ENCODE measurements at regions of chr5 and their contacts with region 1.

Region 1: DNA sequence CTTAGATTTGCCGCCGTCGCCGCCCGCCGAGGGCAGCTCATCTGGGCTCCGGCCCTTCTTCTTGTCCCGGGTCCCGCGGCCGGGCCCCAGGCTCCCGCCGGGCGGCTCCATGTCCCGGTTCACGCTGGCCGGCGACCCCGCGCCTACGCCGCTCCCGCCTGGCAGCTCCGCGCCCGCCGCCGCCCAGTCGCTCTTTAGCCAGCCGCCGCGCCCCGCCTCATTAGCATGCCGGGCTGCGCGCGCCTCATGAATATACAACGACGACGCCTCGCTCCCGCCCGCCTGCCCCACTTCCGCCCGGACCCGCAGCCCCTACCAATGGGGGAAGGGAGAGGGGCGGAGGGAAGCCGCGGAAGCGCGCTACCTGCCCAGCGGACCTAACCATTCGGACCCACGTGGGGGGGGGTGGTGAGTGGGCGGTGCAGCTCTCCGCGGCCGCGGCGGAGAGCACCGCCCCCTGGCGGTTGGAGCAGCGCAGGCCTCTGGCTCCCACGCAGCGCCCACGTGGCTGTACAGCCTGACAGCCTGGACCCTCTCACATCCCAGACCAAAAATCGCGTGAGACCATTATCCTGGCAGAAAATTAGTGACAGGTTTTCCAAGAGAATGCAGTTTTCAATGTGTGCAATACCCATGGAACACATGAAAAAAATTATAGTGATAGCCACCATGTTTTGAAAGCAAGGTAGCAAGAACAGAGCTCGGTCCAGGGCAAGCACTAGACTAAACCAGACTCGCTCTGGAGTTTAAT is at the start of gene DIAPH1:
- DNase-seq: peak; percentile 91
- ATAC-seq: peak; percentile 91
- H3K4me3 ChIP-seq: peak within 1 kb of the TSS; percentile 89
- H3K27ac ChIP-seq: peak within 1 kb of the TSS; percentile 84
- H3K4me1 ChIP-seq: peaks cover 16% of the 10 kb centered on the region
- H3K27me3 ChIP-seq: no peaks in the 10 kb centered on the region
- CTCF ChIP-seq: peak; percentile 95 to 99 (median 96); a peak in 5 of 6 replicates
- EP300 ChIP-seq: peak in 1 of 2 experiments; percentile 55; a peak in 2 of 4 replicates
- POLR2A ChIP-seq: peak; percentile 87
- RAD21 ChIP-seq: peak; percentile 80
- polyA plus RNA-seq, gene DIAPH1: 46.3 to 56.0 TPM

Region 2: DNA sequence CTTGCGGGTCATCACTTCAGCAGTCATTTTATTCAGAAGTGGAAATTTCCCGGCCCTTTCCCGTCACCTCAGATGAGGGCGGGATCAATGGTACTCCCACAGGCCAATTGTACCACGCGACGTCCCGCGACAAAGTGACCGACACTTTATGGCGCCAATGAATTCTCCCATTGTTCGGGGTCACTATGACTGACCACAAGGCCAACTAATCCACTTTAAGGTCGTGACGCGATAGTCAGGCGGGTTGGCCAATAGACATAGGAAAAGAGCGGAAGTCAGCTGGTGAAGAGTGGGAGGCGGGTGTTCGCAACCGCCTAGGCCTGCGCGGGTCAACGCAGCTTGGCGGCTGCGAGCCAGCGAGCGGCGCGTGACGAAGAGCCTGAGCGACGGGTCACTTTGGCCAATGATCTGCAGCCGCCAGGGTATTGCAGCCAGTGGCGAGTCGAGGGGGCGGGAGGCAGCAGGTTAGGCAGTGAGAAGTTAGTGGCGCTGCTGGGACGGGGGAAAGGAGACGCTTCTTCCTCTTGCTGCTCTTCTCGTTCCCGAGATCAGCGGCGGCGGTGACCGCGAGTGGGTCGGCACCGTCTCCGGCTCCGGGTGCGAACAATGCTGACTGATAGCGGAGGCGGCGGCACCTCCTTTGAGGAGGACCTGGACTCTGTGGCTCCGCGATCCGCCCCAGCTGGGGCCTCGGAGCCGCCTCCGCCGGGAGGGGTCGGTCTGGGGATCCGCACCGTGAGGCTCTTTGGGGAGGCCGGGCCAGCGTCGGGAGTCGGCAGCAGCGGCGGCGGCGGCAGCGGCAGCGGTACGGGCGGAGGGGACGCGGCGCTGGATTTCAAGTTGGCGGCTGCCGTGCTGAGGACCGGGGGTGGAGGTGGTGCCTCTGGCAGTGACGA is 1217.4 kb before region 1 on chr5 and contains the start of gene ANKHD1:
- CTCF ChIA-PET with region 1: no interaction called
- POLR2A ChIA-PET with region 1: no interaction called
- RAD21 ChIA-PET with region 1: no interaction called
- SMC1A ChIA-PET with region 1: no interaction called
- in situ Hi-C with region 1: loop called (anchors 25 kb)
- intact Hi-C with region 1: no loop called
- DNase-seq: peak; percentile 100
- ATAC-seq: peak; percentile 88
- H3K4me3 ChIP-seq: peak within 1 kb of the TSS; percentile 85
- H3K27ac ChIP-seq: peak within 1 kb of the TSS; percentile 98
- H3K4me1 ChIP-seq: no peaks in the 10 kb centered on the region; the same call in 1 of the 2 replicates
- H3K27me3 ChIP-seq: no peaks in the 10 kb centered on the region
- CTCF ChIP-seq: no peak
- EP300 ChIP-seq: no peak
- POLR2A ChIP-seq: peak; percentile 97
- RAD21 ChIP-seq: no peak
- polyA plus RNA-seq, gene ANKHD1: 31.6 to 36.3 TPM

Region 3: GRCh38 chr5:141590127-141590526 is 28.9 kb before region 1 on chr5:
- CTCF ChIA-PET with region 1: interaction called, 517 read pairs
- POLR2A ChIA-PET with region 1: interaction called, 50 read pairs
- RAD21 ChIA-PET with region 1: interaction called, 299 read pairs
- SMC1A ChIA-PET with region 1: interaction called, 169 read pairs
- in situ Hi-C with region 1: no loop called
- intact Hi-C with region 1: loop called (anchors 1 kb)
- DNase-seq: no peak
- ATAC-seq: no peak
- H3K4me3 ChIP-seq: no peak overlapping the region
- H3K27ac ChIP-seq: no peak overlapping the region
- H3K4me1 ChIP-seq: peaks cover 19% of the 10 kb centered on the region
- H3K27me3 ChIP-seq: no peaks in the 10 kb centered on the region
- CTCF ChIP-seq: no peak
- EP300 ChIP-seq: no peak
- POLR2A ChIP-seq: no peak
- RAD21 ChIP-seq: no peak

Region 4: DNA sequence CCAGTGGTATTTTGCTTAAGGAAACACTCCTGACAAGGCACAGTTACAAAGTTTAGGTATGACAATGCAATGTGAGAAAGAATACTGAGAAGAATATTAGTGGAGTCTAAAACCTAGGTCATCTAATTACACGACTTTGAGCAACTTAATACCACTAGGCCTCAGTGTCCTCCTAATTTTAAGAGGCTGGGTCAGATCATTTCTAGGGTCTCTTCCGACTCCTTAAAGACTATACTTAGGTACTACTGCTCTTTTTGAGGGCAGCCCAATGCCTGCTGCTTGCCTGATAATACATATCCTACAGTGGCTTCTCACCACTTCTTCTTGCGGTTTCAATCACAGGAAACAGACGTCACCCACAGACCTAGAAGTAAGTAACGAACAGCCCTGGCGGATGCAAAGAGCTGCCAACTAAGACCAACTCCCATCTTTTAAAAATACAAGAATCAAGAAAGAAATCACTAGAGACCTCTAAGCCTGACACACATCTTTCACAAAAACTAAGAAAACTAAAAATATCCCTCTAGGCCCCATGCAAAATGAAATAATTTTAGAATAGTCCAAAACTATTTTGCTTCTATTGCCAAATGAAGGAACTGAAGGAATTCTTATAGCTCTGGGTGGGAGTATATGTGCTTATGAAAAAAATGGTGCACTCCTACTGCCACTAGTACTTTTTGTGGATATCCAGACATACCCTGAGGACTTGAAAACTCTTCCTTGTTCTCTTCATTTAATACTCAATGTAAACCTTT is 13.3 kb before region 1 on chr5:
- CTCF ChIA-PET with region 1: interaction called, 172 read pairs
- POLR2A ChIA-PET with region 1: interaction called, 41 read pairs
- RAD21 ChIA-PET with region 1: interaction called, 89 read pairs
- SMC1A ChIA-PET with region 1: interaction called, 199 read pairs
- in situ Hi-C with region 1: no loop called
- intact Hi-C with region 1: loop called (anchors 1 kb)
- DNase-seq: peak; percentile 87
- ATAC-seq: peak; percentile 94
- H3K4me3 ChIP-seq: peak overlapping the region; percentile 23
- H3K27ac ChIP-seq: peak overlapping the region; percentile 77
- H3K4me1 ChIP-seq: peaks cover 34% of the 10 kb centered on the region
- H3K27me3 ChIP-seq: no peaks in the 10 kb centered on the region
- CTCF ChIP-seq: no peak
- EP300 ChIP-seq: peak; percentile 58 to 81
- POLR2A ChIP-seq: no peak
- RAD21 ChIP-seq: 0 out of 2 replicates have a peak, but pooled peaks have one; percentile 7

Region 5: DNA sequence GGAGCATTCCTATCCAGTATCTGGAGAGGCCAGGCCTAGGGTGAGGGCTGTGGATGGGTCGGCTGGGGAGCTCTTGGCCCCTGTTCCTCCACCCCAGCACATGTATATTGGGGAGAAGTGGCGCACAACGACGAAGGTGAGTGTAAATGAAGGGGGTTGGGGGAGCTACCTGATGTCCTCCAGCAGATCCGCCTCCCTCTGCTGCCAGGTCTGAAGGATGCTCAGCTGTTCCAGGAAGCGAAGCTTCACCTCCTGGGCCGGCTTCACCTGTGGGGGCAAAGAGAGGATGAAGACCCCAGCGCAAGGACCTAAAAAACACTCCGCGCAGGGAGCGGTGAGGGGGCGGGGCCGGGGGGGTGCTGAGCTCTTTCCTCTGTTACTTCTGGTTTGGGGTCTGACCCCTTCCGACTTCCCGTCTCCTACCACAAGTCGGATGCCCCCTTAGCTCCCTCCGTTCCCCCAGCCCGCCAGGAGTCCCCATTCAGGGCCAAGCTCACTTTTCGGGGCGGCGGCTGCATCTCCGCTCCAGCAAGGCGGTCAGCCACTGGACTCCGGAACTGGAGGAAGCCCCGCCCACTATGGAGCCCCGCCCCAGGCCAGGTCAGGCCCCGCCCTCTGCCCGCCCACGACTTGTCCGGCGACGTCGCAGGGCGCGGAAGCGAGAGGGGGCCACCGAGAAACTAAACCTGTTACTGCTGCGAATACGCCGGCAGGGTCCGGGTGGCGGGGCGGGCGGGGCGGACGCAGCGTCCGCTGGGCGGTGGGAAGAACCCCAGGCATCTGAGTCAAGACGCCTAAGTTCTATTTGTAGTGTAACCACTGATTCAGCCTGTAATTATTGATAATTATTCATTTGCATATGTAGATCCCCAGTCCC is 32.1 kb after region 1 on chr5 and contains the start of gene FCHSD1:
- CTCF ChIA-PET with region 1: interaction called, 13 read pairs
- POLR2A ChIA-PET with region 1: interaction called, 6 read pairs
- RAD21 ChIA-PET with region 1: interaction called, 11 read pairs
- SMC1A ChIA-PET with region 1: interaction called, 7 read pairs
- in situ Hi-C with region 1: no loop called
- intact Hi-C with region 1: no loop called
- DNase-seq: no peak
- ATAC-seq: peak; percentile 99
- H3K4me3 ChIP-seq: peak within 1 kb of the TSS; percentile 85
- H3K27ac ChIP-seq: peak within 1 kb of the TSS; percentile 51
- H3K4me1 ChIP-seq: peaks cover 8% of the 10 kb centered on the region
- H3K27me3 ChIP-seq: no peaks in the 10 kb centered on the region
- CTCF ChIP-seq: no peak
- EP300 ChIP-seq: no peak
- POLR2A ChIP-seq: peak; percentile 80
- RAD21 ChIP-seq: no peak
- polyA plus RNA-seq, gene FCHSD1: 0.97 to 1.0 TPM